Naive thymus-derived CD8-positive, alpha-beta T cell (primary cell): ENCODE measurements at regions of chr6 and their contacts with region 1.

Region 1: GRCh38 chr6:52399511-52400312 is 20.4 kb upstream of the EFHC1 start:
- DNase-seq: peak in 5 of 10 donors; percentile 39 to 64 (median 54)
- ATAC-seq: peak; percentile 24 to 27
- H3K4me3 Mint-ChIP-seq: peak overlapping the region; percentile 42 to 83 (median 68)
- H3K27ac Mint-ChIP-seq: peak overlapping the region; percentile 93 to 100 (median 96)
- H3K4me1 Mint-ChIP-seq: peaks cover 49 to 86% (median 72%) of the 10 kb centered on the region in 4 donors
- H3K27me3 Mint-ChIP-seq: no peaks in the 10 kb centered on the region

Region 2: DNA sequence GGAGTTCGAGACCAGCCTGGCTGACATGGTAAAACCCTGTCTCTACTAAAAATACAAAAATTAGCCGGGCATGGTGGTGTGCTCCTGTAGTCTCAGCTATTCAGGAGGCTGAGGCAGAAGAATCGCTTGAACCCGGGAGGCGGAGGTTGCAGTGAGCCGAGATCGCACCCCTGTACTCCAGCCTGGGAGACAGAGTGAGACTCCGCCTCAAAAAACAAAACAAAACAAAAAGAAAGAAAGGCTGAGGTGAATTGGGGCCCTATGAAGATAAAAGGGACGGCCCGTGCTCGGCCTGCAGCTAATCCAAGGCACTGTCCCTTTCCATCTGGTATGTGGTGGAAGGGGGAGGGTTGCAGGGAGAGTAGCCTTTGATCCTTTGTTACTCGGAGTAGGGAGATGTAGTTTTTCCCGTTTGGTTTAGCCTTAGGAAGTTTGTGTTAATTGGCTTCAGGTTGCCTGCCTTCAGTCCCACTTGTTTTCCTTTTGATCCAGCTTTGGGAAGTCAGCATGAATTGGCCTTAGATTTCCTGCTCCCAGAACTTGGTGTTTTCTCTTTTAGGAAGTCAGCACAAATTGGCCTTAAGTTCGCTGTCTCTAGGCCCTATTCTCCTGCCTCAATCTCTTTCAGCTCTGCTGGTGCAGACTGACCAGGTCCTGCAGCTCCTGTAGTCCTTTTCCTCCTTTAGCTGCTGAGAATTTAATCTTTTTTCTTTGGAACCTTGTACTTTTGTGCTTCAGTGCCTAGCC is 73.8 kb before region 1 on chr6:
- POLR2A ChIA-PET with region 1: no interaction called
- DNase-seq: no peak
- ATAC-seq: no peak
- H3K4me3 Mint-ChIP-seq: no peak overlapping the region
- H3K27ac Mint-ChIP-seq: peak overlapping the region in 2 of 10 donors; percentile 27 to 36
- H3K4me1 Mint-ChIP-seq: peaks cover 5 to 21% (median 17%) of the 10 kb centered on the region in 4 donors
- H3K27me3 Mint-ChIP-seq: no peaks in the 10 kb centered on the region

Region 3: DNA sequence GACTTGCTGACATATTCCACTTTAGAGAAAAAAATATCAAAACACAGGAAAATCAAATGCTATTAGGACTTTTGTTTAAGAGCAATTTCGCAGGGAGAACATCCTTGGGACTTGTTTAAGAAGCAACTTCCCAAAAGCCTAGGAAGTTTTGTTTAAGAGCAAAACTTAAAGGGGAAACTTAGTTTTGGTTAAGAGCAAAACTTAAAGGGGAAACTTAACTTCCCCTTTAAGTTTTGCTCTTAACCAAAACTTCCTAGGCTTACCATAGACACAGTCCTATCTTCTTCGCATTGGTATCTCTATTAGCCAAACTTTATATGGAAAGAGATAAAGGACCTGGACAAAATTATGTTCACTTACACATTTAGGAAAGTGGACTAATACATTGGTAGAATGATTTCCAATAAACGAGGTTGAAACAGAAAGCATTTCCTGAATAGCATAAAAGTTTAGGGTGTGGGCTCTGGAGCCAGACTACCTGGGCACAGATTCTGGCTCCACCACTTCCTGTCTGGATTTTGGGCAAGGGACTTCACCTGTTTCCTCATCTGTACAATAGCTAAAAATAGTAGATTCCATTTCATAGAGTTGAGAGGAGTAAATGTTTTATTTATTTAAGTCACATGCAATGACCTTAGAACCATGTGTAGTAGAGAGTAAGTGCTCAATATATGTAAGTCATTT is 22.0 kb before region 1 on chr6:
- POLR2A ChIA-PET with region 1: interaction called, 19 read pairs
- DNase-seq: no peak
- ATAC-seq: peak; percentile 36 to 50
- H3K4me3 Mint-ChIP-seq: peak overlapping the region; percentile 20 to 83 (median 68)
- H3K27ac Mint-ChIP-seq: peak overlapping the region; percentile 66 to 97 (median 90)
- H3K4me1 Mint-ChIP-seq: peaks cover 40 to 93% (median 73%) of the 10 kb centered on the region in 4 donors
- H3K27me3 Mint-ChIP-seq: no peaks in the 10 kb centered on the region